IMR-90 (cell line): ENCODE measurements at regions of chr7 and their contacts with region 1.

Region 1: GRCh38 chr7:43869867-43870240 is 537 bp upstream of the MRPS24 start:
- DNase-seq: peak; percentile 96
- ATAC-seq: peak; percentile 28
- H3K4me3 ChIP-seq: peak overlapping the region; percentile 93
- H3K27ac ChIP-seq: peak overlapping the region; percentile 84
- H3K4me1 ChIP-seq: peaks cover 25% of the 10 kb centered on the region
- H3K27me3 ChIP-seq: no peaks in the 10 kb centered on the region
- CTCF ChIP-seq: no peak
- POLR2A ChIP-seq: peak; percentile 37; the same call in 1 of the 2 replicates
- RAD21 ChIP-seq: no peak

Region 2: DNA sequence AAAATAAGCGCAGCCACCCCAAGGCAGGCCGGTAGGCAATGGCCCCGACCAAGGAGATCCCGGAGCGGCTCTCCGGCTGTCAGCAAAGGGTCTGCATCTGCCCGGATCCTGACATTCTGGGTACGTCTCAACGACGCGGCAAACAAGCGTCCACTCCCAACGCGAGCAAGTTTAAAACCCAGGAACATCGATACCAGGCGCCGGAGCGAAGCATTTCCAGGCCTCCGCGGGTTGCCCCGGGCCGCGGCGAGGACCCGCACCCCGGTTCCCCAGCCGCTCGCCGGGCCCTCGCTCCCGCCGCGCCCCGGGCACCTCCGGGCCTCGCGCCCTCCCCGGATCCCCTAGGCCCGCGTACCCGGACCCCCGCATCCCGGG is 36.1 kb after region 1 on chr7:
- CTCF ChIA-PET with region 1: no interaction called
- POLR2A ChIA-PET with region 1: no interaction called
- dilution Hi-C with region 1: no loop called
- in situ Hi-C with region 1: no loop called
- intact Hi-C with region 1: loop called (anchors 2 kb)
- DNase-seq: peak; percentile 34
- ATAC-seq: peak; percentile 56
- H3K4me3 ChIP-seq: peak overlapping the region; percentile 81
- H3K27ac ChIP-seq: peak overlapping the region; percentile 67
- H3K4me1 ChIP-seq: peaks cover 7% of the 10 kb centered on the region
- H3K27me3 ChIP-seq: no peaks in the 10 kb centered on the region
- CTCF ChIP-seq: no peak
- POLR2A ChIP-seq: no peak
- RAD21 ChIP-seq: no peak

Region 3: DNA sequence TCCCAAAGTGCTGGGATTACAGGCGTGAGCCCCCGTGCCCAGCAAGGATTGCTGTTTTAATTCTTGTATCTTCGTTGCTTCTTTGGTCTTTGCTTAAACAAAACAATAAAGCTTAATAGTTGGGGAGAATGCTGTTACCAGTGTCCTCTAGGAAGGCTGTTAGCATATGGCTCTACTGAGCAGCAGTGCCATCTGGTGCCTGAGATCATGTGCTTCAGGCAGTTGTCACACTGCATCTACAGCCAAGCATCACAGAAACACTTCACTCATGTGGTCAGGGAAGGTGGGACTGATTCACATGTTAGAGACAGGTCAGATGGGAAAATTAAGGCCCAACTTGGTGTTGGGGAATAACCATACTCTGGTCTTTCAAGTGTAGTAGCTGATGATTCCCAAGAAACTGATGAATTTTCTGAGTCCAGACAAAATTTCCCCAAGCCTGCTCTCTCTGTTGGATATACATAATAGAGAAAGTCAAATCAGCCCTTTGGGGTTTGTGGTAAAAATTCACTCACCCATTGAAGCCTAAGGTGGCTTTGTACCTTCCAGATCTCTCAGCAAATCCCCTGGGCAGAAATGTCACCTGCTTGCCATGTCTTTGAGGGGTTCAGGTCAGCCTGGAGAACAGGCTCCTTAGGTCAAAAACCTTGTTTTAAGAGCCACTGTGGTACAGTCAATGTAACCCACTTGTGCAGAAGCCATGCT is 84.8 kb after region 1 on chr7:
- CTCF ChIA-PET with region 1: interaction called, 3 read pairs
- POLR2A ChIA-PET with region 1: no interaction called
- dilution Hi-C with region 1: no loop called
- in situ Hi-C with region 1: no loop called
- intact Hi-C with region 1: loop called (anchors 5 kb)
- DNase-seq: peak; percentile 75
- ATAC-seq: peak; percentile 94
- H3K4me3 ChIP-seq: no peak overlapping the region
- H3K27ac ChIP-seq: no peak overlapping the region
- H3K4me1 ChIP-seq: no peaks in the 10 kb centered on the region
- H3K27me3 ChIP-seq: no peaks in the 10 kb centered on the region
- CTCF ChIP-seq: peak; percentile 59
- POLR2A ChIP-seq: no peak
- RAD21 ChIP-seq: peak; percentile 80